Cardiac septum (tissue), 1 donor: ENCODE measurements at regions of chr5 and their contacts with region 1.

Region 1: GRCh38 chr5:150155258-150156026 is at the start of gene PDGFRB:
- DNase-seq: peak; percentile 88
- total RNA-seq, gene PDGFRB: 54.6 TPM

Region 2: DNA sequence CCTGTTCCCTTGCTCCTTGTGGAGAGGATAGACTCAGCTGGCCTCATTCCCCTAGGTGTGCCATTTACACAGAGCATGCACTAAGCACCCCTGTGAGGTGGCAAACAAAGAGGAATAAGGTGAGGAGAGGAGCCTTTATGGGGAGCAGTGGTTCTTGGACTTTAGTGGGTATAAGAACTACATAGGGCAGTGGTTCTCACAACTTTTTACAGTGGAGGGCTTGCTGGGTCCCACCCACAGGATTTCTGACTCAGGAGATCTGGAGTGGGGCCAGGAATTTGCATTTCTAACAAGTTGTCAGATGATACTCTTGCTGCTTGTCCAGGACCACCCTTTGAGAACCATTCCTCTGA is 111.1 kb before region 1 on chr5:
- intact Hi-C with region 1: no loop called
- DNase-seq: no peak

Region 3: DNA sequence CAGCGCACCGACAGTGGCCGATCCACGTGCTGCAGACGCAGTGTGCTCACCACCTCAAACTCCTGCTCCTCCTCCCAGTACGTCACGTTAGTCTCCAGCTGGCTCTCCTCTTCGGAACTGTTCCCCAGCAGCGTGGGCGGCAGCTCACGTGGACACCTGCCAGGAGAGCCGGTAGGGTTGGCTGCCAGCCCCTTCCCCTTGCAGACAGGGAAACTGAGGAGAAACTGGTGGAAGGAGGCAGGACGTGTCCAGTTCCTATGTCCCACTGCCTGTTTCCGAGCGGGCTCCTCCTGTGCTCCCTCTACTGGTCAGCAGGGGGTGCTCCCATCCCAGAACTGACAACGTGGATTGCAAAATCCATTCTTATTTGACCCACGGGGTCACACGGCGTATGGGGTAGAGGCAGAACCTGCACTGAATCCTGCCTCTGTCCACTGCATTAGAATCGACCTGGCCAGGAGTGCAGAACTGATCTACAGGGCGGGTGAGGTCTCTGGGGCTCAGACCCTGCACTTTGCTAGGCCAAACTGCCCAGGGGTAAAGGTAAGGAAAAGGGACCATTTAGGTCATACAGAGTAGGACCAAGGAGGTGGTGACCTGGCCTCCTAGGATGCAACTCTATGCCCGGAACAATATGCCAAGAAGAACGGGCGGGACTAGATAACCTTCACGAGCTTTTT is 25.5 kb before region 1 on chr5:
- intact Hi-C with region 1: no loop called
- DNase-seq: no peak

Region 4: GRCh38 chr5:150141544-150142190 is 13.8 kb before region 1 on chr5:
- intact Hi-C with region 1: loop called (anchors 2 kb)
- DNase-seq: no peak